Esophagus muscularis mucosa (tissue), 4 donors: ENCODE measurements at regions of chr2 and their contacts with region 1.

Region 1: DNA sequence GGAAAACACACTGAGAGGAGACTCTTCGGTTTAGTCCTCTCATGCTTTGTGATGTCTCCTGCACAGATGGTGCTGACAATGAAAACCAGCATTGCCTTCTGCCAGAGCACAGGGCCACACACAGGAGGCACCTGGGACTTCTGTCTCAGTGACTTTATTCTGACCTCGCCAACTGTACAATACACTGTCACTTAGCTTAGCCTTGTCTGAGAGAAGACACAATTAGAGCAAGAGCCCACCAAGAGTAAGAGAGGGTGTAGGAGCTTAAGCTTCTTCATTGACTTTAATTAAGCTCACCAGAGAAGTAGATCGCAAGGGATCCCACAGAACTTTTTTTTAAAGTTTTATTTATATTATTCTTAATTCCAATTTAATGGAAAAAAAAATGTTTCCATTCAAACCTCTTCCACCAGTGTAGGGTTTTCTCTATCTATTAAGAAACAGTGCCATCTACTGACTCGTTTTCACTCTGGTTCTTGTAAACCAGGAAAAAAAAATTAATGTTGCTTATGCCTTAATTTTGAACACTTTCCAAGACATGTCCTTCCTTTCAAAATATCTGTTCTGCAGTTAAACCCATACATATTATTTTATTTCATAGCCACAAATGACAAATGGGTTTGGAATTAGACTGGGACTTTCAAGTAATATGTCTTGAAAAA is 42.4 kb upstream of the DDX18 start:
- DNase-seq: no peak
- H3K4me3 ChIP-seq: no peak overlapping the region
- H3K27ac ChIP-seq: no peak overlapping the region
- H3K4me1 ChIP-seq: no peaks in the 10 kb centered on the region
- H3K27me3 ChIP-seq: peaks cover 0 to 4% (median 0%) of the 10 kb centered on the region in 4 donors
- CTCF ChIP-seq: peak in 2 of 3 experiments; percentile 19 to 39
- EP300 ChIP-seq: no peak
- POLR2A ChIP-seq: no peak

Region 2: DNA sequence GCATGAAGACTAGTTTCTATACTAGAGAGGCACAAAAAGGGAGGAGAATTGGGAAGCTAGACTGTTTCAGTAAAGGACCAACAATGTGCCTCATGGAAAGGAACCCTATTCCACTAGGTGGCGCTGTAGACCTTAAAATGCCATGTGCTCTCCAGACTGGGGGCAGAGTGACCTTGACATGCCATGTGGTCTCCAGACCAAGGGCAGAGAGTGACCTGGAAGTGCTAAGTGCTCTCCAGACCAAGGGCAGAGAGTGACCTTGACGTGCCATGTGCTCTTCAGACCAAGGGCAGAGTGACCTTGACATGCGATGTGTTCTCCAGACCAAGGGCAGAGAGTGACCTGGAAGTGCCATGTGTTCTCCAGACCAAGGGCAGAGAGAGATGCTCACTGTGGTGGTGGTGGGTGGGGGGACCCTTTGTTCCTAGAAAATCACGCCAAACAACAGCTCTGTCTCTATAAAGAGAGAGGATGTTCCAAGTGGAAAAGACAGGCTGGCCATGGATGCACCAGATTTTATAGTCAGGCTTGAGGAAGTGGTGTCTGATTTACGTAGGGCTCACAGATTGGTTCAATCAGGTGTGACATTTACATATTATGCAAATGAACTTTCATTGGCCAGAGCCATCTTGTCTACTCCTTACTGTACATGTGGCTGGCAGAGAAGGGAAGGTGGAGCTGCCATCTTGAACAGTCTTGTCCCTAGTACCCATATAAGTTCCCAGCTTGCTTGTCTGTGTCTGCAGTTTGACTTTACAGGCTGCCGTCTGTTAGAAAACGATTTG is 301.6 kb before region 1 on chr2:
- intact Hi-C with region 1: loop called (anchors 10 kb)
- DNase-seq: no peak
- H3K4me3 ChIP-seq: no peak overlapping the region
- H3K27ac ChIP-seq: no peak overlapping the region
- H3K4me1 ChIP-seq: no peaks in the 10 kb centered on the region
- H3K27me3 ChIP-seq: no peaks in the 10 kb centered on the region
- CTCF ChIP-seq: peak; percentile 8 to 37 (median 26)
- EP300 ChIP-seq: no peak
- POLR2A ChIP-seq: no peak

Region 3: GRCh38 chr2:118177884-118178283 is 405.8 kb after region 1 on chr2:
- intact Hi-C with region 1: no loop called
- DNase-seq: peak; percentile 72
- H3K4me3 ChIP-seq: no peak overlapping the region
- H3K27ac ChIP-seq: no peak overlapping the region
- H3K4me1 ChIP-seq: no peaks in the 10 kb centered on the region
- H3K27me3 ChIP-seq: peaks cover 0 to 18% (median 0%) of the 10 kb centered on the region in 4 donors
- CTCF ChIP-seq: no peak
- EP300 ChIP-seq: no peak
- POLR2A ChIP-seq: no peak